GM12878 (cell line): ENCODE measurements at regions of chr12 and their contacts with region 1.

Region 1: GRCh38 chr12:94180558-94181296 is 32.4 kb downstream of the PLXNC1 start:
- DNase-seq: no peak
- ATAC-seq: no peak
- H3K4me3 ChIP-seq: no peak overlapping the region
- H3K27ac ChIP-seq: no peak overlapping the region
- H3K4me1 ChIP-seq: peaks cover 10% of the 10 kb centered on the region
- H3K27me3 ChIP-seq: no peaks in the 10 kb centered on the region
- CTCF ChIP-seq: no peak
- EP300 ChIP-seq: no peak
- POLR2A ChIP-seq: no peak
- RAD21 ChIP-seq: no peak

Region 2: DNA sequence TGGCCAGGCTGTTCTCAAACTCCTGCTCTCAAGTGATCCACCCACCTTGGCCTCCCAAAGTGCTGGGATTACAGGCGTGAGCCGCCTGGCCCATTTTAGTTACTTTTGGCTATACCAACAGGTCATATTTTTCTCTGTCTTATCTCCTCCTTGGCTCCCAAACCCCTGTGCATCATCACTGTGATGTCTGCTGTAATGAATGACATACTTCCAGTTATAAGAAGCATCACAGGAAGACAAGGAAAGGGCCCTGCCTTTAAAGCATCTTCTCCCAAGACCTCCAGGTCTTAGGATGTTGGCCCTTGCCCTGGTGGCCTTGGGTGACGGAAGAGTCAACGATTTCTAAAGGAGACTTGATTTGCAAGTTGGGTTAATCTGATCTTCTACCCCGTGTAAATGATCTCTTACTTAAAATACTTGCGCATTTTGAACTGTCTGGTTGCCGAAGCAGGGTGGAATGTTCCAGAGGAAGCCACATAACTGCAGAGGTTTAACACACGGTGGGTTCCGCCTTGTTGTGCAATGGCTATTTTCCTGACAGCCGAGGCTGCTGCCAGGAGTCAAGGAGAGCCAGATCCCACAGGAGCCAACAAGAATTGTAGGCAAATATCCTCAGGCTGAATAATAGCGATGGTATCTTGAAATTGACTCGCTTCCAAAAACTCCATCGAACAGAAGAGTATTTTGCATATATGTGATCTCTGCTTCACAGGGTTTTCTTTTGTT is 88.0 kb before region 1 on chr12:
- CTCF ChIA-PET with region 1: no interaction called
- POLR2A ChIA-PET with region 1: no interaction called
- RAD21 ChIA-PET with region 1: no interaction called
- SMC1A ChIA-PET with region 1: no interaction called
- in situ Hi-C with region 1: no loop called
- intact Hi-C with region 1: no loop called
- DNase-seq: no peak
- ATAC-seq: no peak
- H3K4me3 ChIP-seq: no peak overlapping the region
- H3K27ac ChIP-seq: no peak overlapping the region
- H3K4me1 ChIP-seq: no peaks in the 10 kb centered on the region
- H3K27me3 ChIP-seq: no peaks in the 10 kb centered on the region
- CTCF ChIP-seq: no peak
- EP300 ChIP-seq: no peak
- POLR2A ChIP-seq: no peak
- RAD21 ChIP-seq: no peak

Region 3: DNA sequence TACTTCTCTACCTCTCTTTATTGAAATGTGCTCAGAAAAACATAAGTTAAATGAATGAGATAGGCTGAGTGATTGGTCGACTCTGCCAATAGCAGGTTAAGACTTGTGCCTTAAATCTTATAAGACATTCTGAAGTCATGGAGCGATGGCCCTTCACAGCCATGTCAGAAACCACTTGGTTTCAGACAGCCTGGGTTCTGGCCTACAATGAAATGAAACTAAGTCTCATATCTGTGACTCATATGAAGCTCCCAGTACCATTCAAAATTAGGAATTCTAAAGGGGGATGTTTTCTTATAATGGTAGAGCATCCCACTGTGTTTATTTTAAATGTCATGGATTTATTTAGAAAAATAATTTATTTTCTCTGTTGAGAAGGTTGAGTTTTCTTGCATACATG is 10.3 kb after region 1 on chr12:
- CTCF ChIA-PET with region 1: interaction called, 11 read pairs
- POLR2A ChIA-PET with region 1: interaction called, 4 read pairs
- RAD21 ChIA-PET with region 1: interaction called, 4 read pairs
- SMC1A ChIA-PET with region 1: interaction called, 21 read pairs
- in situ Hi-C with region 1: no loop called
- intact Hi-C with region 1: no loop called
- DNase-seq: no peak
- ATAC-seq: peak; percentile 83
- H3K4me3 ChIP-seq: no peak overlapping the region
- H3K27ac ChIP-seq: peak overlapping the region; percentile 70
- H3K4me1 ChIP-seq: peaks cover 23% of the 10 kb centered on the region
- H3K27me3 ChIP-seq: no peaks in the 10 kb centered on the region
- CTCF ChIP-seq: no peak
- EP300 ChIP-seq: no peak
- POLR2A ChIP-seq: no peak
- RAD21 ChIP-seq: no peak

Region 4: GRCh38 chr12:95130096-95130495 is 949.4 kb after region 1 on chr12:
- CTCF ChIA-PET with region 1: no interaction called
- POLR2A ChIA-PET with region 1: no interaction called
- RAD21 ChIA-PET with region 1: no interaction called
- SMC1A ChIA-PET with region 1: no interaction called
- in situ Hi-C with region 1: no loop called
- intact Hi-C with region 1: no loop called
- DNase-seq: no peak
- ATAC-seq: no peak
- H3K4me3 ChIP-seq: no peak overlapping the region
- H3K27ac ChIP-seq: no peak overlapping the region
- H3K4me1 ChIP-seq: no peaks in the 10 kb centered on the region
- H3K27me3 ChIP-seq: no peaks in the 10 kb centered on the region
- CTCF ChIP-seq: no peak
- EP300 ChIP-seq: no peak
- POLR2A ChIP-seq: no peak
- RAD21 ChIP-seq: no peak